ENCODE measurements at regions of chr5 and their contacts with region 1.

Region 1: DNA sequence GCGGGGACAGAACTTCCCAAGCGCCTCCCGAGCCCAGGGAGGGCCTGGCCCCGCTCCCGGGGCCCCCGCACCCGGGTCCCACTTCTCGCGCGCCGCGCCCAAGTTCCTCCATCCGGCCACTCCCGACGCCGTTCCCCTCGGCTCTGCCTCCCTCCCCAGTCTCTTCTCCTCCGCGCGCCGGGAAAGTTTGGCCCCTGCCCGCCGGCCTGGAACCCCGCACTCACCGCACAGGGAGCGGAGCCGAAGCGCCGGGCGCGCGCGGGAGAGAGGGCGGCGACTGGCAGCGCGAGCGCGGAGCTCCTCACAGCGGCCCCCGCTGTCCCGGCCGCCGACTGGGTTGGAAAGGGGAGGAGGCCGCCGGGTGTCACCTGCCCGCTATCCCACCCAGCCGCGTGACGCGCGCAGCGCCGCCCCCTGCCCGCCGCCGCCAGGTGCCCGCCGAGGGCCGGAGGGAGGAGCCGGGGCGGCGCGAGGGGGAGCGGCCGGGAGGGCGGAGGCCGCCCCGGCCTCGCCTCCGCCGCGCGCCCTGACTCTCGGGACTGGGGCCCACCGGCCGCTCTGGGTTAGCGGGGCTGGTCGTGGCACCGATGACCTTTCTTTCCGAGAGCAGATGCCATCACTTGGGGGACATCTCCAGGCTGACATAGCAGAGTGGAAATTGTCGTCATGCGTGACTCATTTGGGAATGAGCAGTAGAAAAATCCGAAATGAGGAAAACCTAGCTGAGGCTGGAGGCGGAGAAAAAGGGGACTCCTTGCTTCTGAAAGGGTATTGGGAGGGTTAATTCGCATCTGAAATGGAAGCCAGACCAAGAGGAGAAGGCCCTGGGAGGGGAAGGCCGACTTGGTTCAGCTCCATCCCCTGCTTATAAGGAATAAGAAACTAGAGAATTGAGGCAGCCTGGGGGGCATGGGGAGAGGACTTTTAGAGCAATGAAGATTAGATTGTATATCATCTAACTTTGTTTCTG is at the start of gene ELOVL7:
- DNase-seq: peak in 2 of 9 donors; percentile 11 to 68
- ATAC-seq: peak; percentile 72
- H3K4me3 ChIP-seq: no peak within 1 kb of the TSS
- H3K4me3 Mint-ChIP-seq: peak within 1 kb of the TSS; percentile 33 to 81 (median 69)
- H3K27ac ChIP-seq: no peak within 1 kb of the TSS
- H3K27ac Mint-ChIP-seq: no peak within 1 kb of the TSS
- H3K4me1 ChIP-seq: no peaks in the 10 kb centered on the region
- H3K4me1 Mint-ChIP-seq: peaks cover 0 to 15% (median 13%) of the 10 kb centered on the region in 7 donors
- H3K27me3 ChIP-seq: peaks cover 0 to 3% of the 10 kb centered on the region in 2 donors
- H3K27me3 Mint-ChIP-seq: peaks cover 51 to 66% (median 59%) of the 10 kb centered on the region in 5 donors
- total RNA-seq, gene ELOVL7: 0.29 to 2.2 (median 0.48) TPM in 3 of 5 experiments, not detected in the others

Region 2: GRCh38 chr5:60699530-60700382 is 144.5 kb before region 1 on chr5 and contains the start of gene DEPDC1B:
- CTCF ChIA-PET with region 1: no interaction called
- POLR2A ChIA-PET with region 1: no interaction called
- intact Hi-C with region 1: loop called in 1 of 2 experiments (anchors 2 kb)
- DNase-seq: peak; percentile 68 to 92 (median 82)
- ATAC-seq: peak; percentile 93
- H3K4me3 ChIP-seq: peak within 1 kb of the TSS; percentile 97
- H3K4me3 Mint-ChIP-seq: peak within 1 kb of the TSS; percentile 87 to 99 (median 92)
- H3K27ac ChIP-seq: peak within 1 kb of the TSS; percentile 68
- H3K27ac Mint-ChIP-seq: peak within 1 kb of the TSS in 8 of 9 donors; percentile 61 to 91 (median 76)
- H3K4me1 ChIP-seq: peaks cover 0 to 8% of the 10 kb centered on the region in 2 donors
- H3K4me1 Mint-ChIP-seq: peaks cover 6 to 39% (median 19%) of the 10 kb centered on the region in 7 donors
- H3K27me3 ChIP-seq: no peaks in the 10 kb centered on the region
- H3K27me3 Mint-ChIP-seq: peaks cover 0 to 35% (median 0%) of the 10 kb centered on the region in 5 donors
- total RNA-seq, gene DEPDC1B: 0.24 to 24.0 (median 0.31) TPM in 4 of 5 experiments, not detected in the other

Region 3: GRCh38 chr5:60960591-60960990 is 116.4 kb after region 1 on chr5:
- CTCF ChIA-PET with region 1: no interaction called
- POLR2A ChIA-PET with region 1: no interaction called
- intact Hi-C with region 1: no loop called
- DNase-seq: peak in 5 of 9 donors; percentile 18 to 48 (median 39)
- ATAC-seq: peak; percentile 54
- H3K4me3 ChIP-seq: no peak overlapping the region
- H3K4me3 Mint-ChIP-seq: peak overlapping the region in 1 of 10 donors; percentile 9
- H3K27ac ChIP-seq: no peak overlapping the region
- H3K27ac Mint-ChIP-seq: peak overlapping the region in 1 of 9 donors; percentile 8
- H3K4me1 ChIP-seq: no peaks in the 10 kb centered on the region
- H3K4me1 Mint-ChIP-seq: peaks cover 0 to 30% (median 17%) of the 10 kb centered on the region in 7 donors
- H3K27me3 ChIP-seq: no peaks in the 10 kb centered on the region
- H3K27me3 Mint-ChIP-seq: no peaks in the 10 kb centered on the region